Naive thymus-derived CD4-positive, alpha-beta T cell (primary cell): ENCODE measurements at regions of chr14 and their contacts with region 1.

Region 1: DNA sequence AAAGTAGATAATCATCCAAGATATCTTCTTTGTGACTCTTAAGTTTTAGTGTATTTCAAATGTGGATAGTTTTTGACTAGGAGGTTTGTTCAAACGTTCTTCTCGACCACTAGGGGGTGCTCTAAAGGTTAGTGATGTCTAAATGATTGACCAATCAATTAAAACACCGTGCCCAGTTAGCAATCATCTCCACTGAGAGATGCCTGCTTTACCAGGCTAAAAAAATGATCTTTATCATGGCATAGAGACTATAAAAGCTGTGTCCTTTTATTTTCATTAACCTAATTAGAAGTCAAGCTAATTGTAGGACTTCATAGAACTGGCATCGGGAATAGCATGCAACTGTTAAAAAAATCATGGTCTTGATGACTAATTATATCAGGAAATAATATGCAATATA is 153.9 kb downstream of the PRKCH start:
- DNase-seq: peak in 2 of 9 donors; percentile 32 to 34
- ATAC-seq: no peak
- H3K4me3 ChIP-seq: no peak overlapping the region
- H3K4me3 Mint-ChIP-seq: peak overlapping the region in 8 of 10 donors; percentile 28 to 94 (median 48)
- H3K27ac ChIP-seq: peak overlapping the region; percentile 98
- H3K27ac Mint-ChIP-seq: peak overlapping the region in 8 of 9 donors; percentile 84 to 100 (median 96)
- H3K4me1 ChIP-seq: peaks cover 93 to 95% of the 10 kb centered on the region in 2 donors
- H3K4me1 Mint-ChIP-seq: peaks cover 55 to 98% (median 95%) of the 10 kb centered on the region in 7 donors
- H3K27me3 ChIP-seq: no peaks in the 10 kb centered on the region
- H3K27me3 Mint-ChIP-seq: no peaks in the 10 kb centered on the region

Region 2: DNA sequence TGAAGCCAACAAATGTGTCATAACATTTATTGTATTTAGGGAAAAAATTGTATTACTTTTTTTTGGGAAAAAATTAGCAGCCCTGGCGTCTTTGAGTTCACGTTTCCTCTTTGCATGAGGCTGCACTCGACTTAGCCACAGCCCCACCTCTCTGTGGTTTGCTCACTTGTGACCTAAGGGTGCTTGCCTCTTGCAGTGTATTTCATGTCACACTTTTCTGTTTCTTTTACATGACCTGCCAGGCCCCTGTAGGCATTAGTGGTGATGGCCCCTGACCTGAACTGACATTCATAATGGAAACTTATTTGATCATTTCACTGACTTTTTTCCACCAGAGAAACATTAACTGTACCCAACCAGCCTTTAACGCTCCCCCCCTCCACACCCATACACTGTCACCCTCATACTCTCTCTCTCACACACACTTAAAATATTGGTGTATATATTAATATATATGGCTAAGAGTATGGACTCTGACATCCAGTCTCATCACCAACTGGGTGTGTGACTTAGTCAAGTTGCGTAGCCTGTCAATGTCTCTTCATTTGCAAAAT is 31.0 kb before region 1 on chr14:
- CTCF ChIA-PET with region 1: no interaction called
- POLR2A ChIA-PET with region 1: no interaction called
- intact Hi-C with region 1: loop called in 1 of 2 experiments (anchors 1 kb)
- DNase-seq: peak in 8 of 9 donors; percentile 36 to 77 (median 54)
- ATAC-seq: peak; percentile 89
- H3K4me3 ChIP-seq: peak overlapping the region; percentile 9
- H3K4me3 Mint-ChIP-seq: peak overlapping the region; percentile 61 to 89 (median 82)
- H3K27ac ChIP-seq: peak overlapping the region; percentile 59
- H3K27ac Mint-ChIP-seq: peak overlapping the region in 8 of 9 donors; percentile 86 to 97 (median 92)
- H3K4me1 ChIP-seq: peaks cover 77 to 90% of the 10 kb centered on the region in 2 donors
- H3K4me1 Mint-ChIP-seq: peaks cover 56 to 99% (median 93%) of the 10 kb centered on the region in 7 donors
- H3K27me3 ChIP-seq: no peaks in the 10 kb centered on the region
- H3K27me3 Mint-ChIP-seq: no peaks in the 10 kb centered on the region

Region 3: GRCh38 chr14:61493239-61493638 is 17.9 kb after region 1 on chr14:
- CTCF ChIA-PET with region 1: interaction called, 5 read pairs
- POLR2A ChIA-PET with region 1: interaction called, 20 read pairs
- intact Hi-C with region 1: loop called in 1 of 2 experiments (anchors 1 kb)
- DNase-seq: no peak
- ATAC-seq: no peak
- H3K4me3 ChIP-seq: no peak overlapping the region
- H3K4me3 Mint-ChIP-seq: no peak overlapping the region
- H3K27ac ChIP-seq: peak overlapping the region; percentile 39
- H3K27ac Mint-ChIP-seq: no peak overlapping the region
- H3K4me1 ChIP-seq: peaks cover 12 to 21% of the 10 kb centered on the region in 2 donors
- H3K4me1 Mint-ChIP-seq: peaks cover 7 to 39% (median 25%) of the 10 kb centered on the region in 7 donors
- H3K27me3 ChIP-seq: no peaks in the 10 kb centered on the region
- H3K27me3 Mint-ChIP-seq: no peaks in the 10 kb centered on the region

Region 4: DNA sequence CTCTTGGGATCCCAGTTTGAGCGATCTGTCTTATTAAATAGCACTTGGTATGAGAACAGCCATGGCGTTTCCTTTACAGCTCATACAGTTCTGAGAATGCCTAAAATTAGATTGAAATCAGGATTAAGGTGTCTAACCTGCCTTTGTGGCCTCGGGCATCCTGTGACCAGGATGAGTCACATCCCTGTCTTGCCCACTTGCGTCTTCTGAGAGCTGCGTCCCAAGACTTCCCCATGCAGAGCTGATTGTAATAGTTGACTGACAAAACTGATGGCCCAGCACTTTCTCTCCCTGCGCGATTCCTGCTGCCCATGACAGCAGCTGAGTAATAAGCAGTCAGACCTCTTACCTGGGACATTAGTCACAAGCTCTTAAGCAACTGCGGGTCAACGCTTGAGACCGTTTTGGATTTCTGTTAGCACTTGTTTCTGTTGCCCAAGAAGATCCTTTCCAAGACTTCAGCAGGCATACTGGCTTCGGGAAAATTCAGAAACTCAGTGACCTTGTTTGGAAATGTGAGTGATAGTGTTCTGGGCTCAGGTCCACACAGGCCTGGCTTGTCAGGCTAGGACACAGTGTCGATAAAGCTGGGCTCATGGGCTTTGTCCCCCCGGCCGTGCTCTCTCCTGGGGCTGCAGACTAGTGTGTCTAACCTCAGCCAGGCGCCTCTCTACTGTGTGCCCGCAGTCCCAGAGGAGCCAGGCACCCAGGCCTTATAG is 50.1 kb after region 1 on chr14:
- CTCF ChIA-PET with region 1: no interaction called
- POLR2A ChIA-PET with region 1: interaction called, 5 read pairs
- intact Hi-C with region 1: loop called in 1 of 2 experiments (anchors 1 kb)
- DNase-seq: peak in 1 of 9 donors; percentile 69
- ATAC-seq: peak; percentile 74
- H3K4me3 ChIP-seq: no peak overlapping the region
- H3K4me3 Mint-ChIP-seq: peak overlapping the region in 3 of 10 donors; percentile 2 to 73 (median 63)
- H3K27ac ChIP-seq: peak overlapping the region; percentile 34
- H3K27ac Mint-ChIP-seq: peak overlapping the region; percentile 69 to 90 (median 81)
- H3K4me1 ChIP-seq: peaks cover 22 to 68% of the 10 kb centered on the region in 2 donors
- H3K4me1 Mint-ChIP-seq: peaks cover 43 to 86% (median 73%) of the 10 kb centered on the region in 7 donors
- H3K27me3 ChIP-seq: no peaks in the 10 kb centered on the region
- H3K27me3 Mint-ChIP-seq: no peaks in the 10 kb centered on the region

Region 5: DNA sequence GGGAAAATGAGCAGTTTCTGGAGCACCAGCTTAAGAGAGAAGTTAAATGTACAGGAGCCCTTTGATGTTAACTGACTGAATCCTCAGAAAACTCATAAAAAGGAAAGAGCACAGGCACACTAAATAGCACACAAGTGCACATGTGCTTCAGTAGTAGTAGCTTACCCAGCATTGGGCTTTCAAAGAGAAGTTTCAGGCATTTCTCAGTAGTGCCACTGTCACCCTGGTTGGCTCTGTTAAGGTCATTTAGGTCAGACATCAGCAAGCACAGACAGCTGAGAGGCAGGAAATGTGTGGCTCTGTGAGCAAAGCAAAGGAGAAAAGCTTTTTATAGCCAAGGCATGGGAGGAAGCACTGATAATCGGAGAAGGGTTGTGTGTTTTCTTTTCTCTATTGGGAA is 123.7 kb after region 1 on chr14:
- CTCF ChIA-PET with region 1: no interaction called
- POLR2A ChIA-PET with region 1: no interaction called
- intact Hi-C with region 1: loop called in 1 of 2 experiments (anchors 1 kb)
- DNase-seq: peak in 3 of 9 donors; percentile 10 to 15 (median 15)
- ATAC-seq: no peak
- H3K4me3 ChIP-seq: no peak overlapping the region
- H3K4me3 Mint-ChIP-seq: peak overlapping the region in 4 of 10 donors; percentile 27 to 55 (median 39)
- H3K27ac ChIP-seq: no peak overlapping the region
- H3K27ac Mint-ChIP-seq: peak overlapping the region in 3 of 9 donors; percentile 53 to 84 (median 71)
- H3K4me1 ChIP-seq: peaks cover 4 to 11% of the 10 kb centered on the region in 2 donors
- H3K4me1 Mint-ChIP-seq: peaks cover 16 to 42% (median 31%) of the 10 kb centered on the region in 7 donors
- H3K27me3 ChIP-seq: no peaks in the 10 kb centered on the region
- H3K27me3 Mint-ChIP-seq: no peaks in the 10 kb centered on the region

Region 6: GRCh38 chr14:61694830-61695694 is 219.7 kb after region 1 on chr14 and contains the start of gene HIF1A:
- CTCF ChIA-PET with region 1: interaction called, 4 read pairs
- POLR2A ChIA-PET with region 1: interaction called, 8 read pairs
- intact Hi-C with region 1: loop called (anchors 1 kb)
- DNase-seq: peak; percentile 83 to 98 (median 96)
- ATAC-seq: peak; percentile 97
- H3K4me3 ChIP-seq: peak within 1 kb of the TSS; percentile 92
- H3K4me3 Mint-ChIP-seq: peak within 1 kb of the TSS; percentile 95 to 99 (median 98)
- H3K27ac ChIP-seq: peak within 1 kb of the TSS; percentile 99
- H3K27ac Mint-ChIP-seq: peak within 1 kb of the TSS; percentile 96 to 99 (median 99)
- H3K4me1 ChIP-seq: peaks cover 9 to 17% of the 10 kb centered on the region in 2 donors
- H3K4me1 Mint-ChIP-seq: peaks cover 36 to 69% (median 62%) of the 10 kb centered on the region in 7 donors
- H3K27me3 ChIP-seq: no peaks in the 10 kb centered on the region
- H3K27me3 Mint-ChIP-seq: peaks cover 0 to 2% (median 0%) of the 10 kb centered on the region in 5 donors
- total RNA-seq, gene HIF1A: 88.8 to 358 (median 143) TPM

Region 7: GRCh38 chr14:61761959-61762786 is 286.9 kb after region 1 on chr14 and contains the start of gene SNAPC1:
- CTCF ChIA-PET with region 1: no interaction called
- POLR2A ChIA-PET with region 1: interaction called, 4 read pairs
- intact Hi-C with region 1: loop called (anchors 1 kb)
- DNase-seq: peak; percentile 92 to 98 (median 96)
- ATAC-seq: peak; percentile 97
- H3K4me3 ChIP-seq: peak within 1 kb of the TSS; percentile 94
- H3K4me3 Mint-ChIP-seq: peak within 1 kb of the TSS; percentile 96 to 100 (median 98)
- H3K27ac ChIP-seq: peak within 1 kb of the TSS; percentile 95
- H3K27ac Mint-ChIP-seq: peak within 1 kb of the TSS; percentile 98 to 100 (median 99)
- H3K4me1 ChIP-seq: peaks cover 13 to 17% of the 10 kb centered on the region in 2 donors
- H3K4me1 Mint-ChIP-seq: peaks cover 27 to 62% (median 53%) of the 10 kb centered on the region in 7 donors
- H3K27me3 ChIP-seq: no peaks in the 10 kb centered on the region
- H3K27me3 Mint-ChIP-seq: peaks cover 0 to 4% (median 0%) of the 10 kb centered on the region in 5 donors
- total RNA-seq, gene SNAPC1: 3.5 to 8.7 (median 5.1) TPM